K562 (cell line): ENCODE measurements at regions of chr2 and their contacts with region 1.

Region 1: GRCh38 chr2:168835969-168836368 is 33.5 kb downstream of the NOSTRIN start:
- DNase-seq: no peak
- ATAC-seq: no peak
- H3K4me3 ChIP-seq: no peak overlapping the region
- H3K27ac ChIP-seq: no peak overlapping the region
- H3K4me1 ChIP-seq: no peaks in the 10 kb centered on the region
- H3K27me3 ChIP-seq: no peaks in the 10 kb centered on the region
- CTCF ChIP-seq: no peak
- EP300 ChIP-seq: no peak
- POLR2A ChIP-seq: no peak
- RAD21 ChIP-seq: no peak

Region 2: DNA sequence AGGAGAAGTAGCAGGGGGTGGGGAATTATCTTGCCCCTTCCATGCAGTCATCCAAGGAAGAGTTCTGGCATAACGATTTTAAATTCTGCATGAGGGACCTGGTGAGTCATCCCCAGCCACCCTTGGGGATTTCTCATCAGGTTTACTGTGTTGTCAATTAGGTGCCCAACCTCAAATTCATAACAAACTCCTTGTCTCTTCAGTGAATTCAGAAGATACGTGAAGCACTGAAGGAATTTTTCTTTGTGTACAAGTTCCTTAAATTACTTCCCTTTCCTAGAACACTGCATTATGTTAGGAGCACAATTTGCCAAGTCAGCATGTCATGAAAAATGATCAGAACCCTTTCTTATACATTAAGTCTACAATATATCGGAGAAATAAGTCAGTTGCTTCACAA is 104.4 kb before region 1 on chr2:
- CTCF ChIA-PET with region 1: no interaction called
- POLR2A ChIA-PET with region 1: no interaction called
- in situ Hi-C with region 1: no loop called
- intact Hi-C with region 1: no loop called
- DNase-seq: peak in 1 of 4 experiments; percentile 44
- ATAC-seq: peak; percentile 33; the same call in 1 of the 3 replicates
- H3K4me3 ChIP-seq: no peak overlapping the region
- H3K27ac ChIP-seq: no peak overlapping the region
- H3K4me1 ChIP-seq: peaks cover 0 to 5% of the 10 kb centered on the region in 2 experiments; a peak in 2 of 5 replicates
- H3K27me3 ChIP-seq: no peaks in the 10 kb centered on the region
- CTCF ChIP-seq: no peak
- EP300 ChIP-seq: no peak
- POLR2A ChIP-seq: no peak
- RAD21 ChIP-seq: no peak

Region 3: GRCh38 chr2:168825126-168825525 is 10.8 kb before region 1 on chr2:
- CTCF ChIA-PET with region 1: no interaction called
- POLR2A ChIA-PET with region 1: interaction called, 11 read pairs
- in situ Hi-C with region 1: no loop called
- intact Hi-C with region 1: no loop called
- DNase-seq: peak in 1 of 4 experiments; percentile 12
- ATAC-seq: no peak; the same call in 1 of the 3 replicates
- H3K4me3 ChIP-seq: no peak overlapping the region
- H3K27ac ChIP-seq: no peak overlapping the region
- H3K4me1 ChIP-seq: peaks cover 0 to 6% of the 10 kb centered on the region in 2 experiments; a peak in 2 of 5 replicates
- H3K27me3 ChIP-seq: no peaks in the 10 kb centered on the region
- CTCF ChIP-seq: no peak
- EP300 ChIP-seq: no peak
- POLR2A ChIP-seq: no peak
- RAD21 ChIP-seq: no peak

Region 4: GRCh38 chr2:168944065-168944464 is 108.1 kb after region 1 on chr2:
- CTCF ChIA-PET with region 1: no interaction called
- POLR2A ChIA-PET with region 1: no interaction called
- in situ Hi-C with region 1: no loop called
- intact Hi-C with region 1: no loop called
- DNase-seq: peak in 2 of 4 experiments; percentile 42 to 56
- ATAC-seq: peak; percentile 83
- H3K4me3 ChIP-seq: no peak overlapping the region
- H3K27ac ChIP-seq: no peak overlapping the region
- H3K4me1 ChIP-seq: peaks cover 0 to 42% of the 10 kb centered on the region in 2 experiments; a peak in 3 of 5 replicates
- H3K27me3 ChIP-seq: no peaks in the 10 kb centered on the region
- CTCF ChIP-seq: peak; percentile 29 to 34 (median 32); a peak in 4 of 6 replicates
- EP300 ChIP-seq: no peak
- POLR2A ChIP-seq: no peak
- RAD21 ChIP-seq: peak; percentile 16 to 59; a peak in 2 of 4 replicates